Mucosa of descending colon (tissue), 3 donors: ENCODE measurements at regions of chr3 and their contacts with region 1.

Region 1: GRCh38 chr3:185332026-185332735 is 30.8 kb upstream of the MAP3K13 start:
- DNase-seq: no peak
- ATAC-seq: peak; percentile 71
- H3K4me3 ChIP-seq: no peak overlapping the region
- H3K4me1 ChIP-seq: peaks cover 25% of the 10 kb centered on the region
- CTCF ChIP-seq: no peak

Region 2: DNA sequence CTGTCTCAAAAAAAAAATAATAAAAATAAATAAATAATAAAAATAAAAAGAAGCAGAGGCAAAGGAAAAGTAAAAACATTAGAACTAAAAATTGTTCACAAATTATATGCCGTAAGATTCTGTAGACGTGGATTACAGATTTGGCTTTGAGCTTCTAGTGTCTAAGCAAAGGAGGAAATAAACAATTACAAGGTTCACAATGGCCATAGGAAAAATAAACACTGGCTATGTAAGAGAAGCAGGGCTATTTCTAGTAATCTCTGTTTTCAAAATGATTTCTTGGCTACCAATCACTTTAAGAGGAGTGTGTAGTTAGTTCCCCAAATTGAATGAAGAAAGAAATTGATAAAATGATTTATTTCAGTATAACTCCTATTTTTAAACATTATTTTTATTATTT is 112.1 kb after region 1 on chr3:
- intact Hi-C with region 1: no loop called
- DNase-seq: no peak
- ATAC-seq: no peak
- H3K4me3 ChIP-seq: no peak overlapping the region
- H3K4me1 ChIP-seq: no peaks in the 10 kb centered on the region
- CTCF ChIP-seq: no peak

Region 3: DNA sequence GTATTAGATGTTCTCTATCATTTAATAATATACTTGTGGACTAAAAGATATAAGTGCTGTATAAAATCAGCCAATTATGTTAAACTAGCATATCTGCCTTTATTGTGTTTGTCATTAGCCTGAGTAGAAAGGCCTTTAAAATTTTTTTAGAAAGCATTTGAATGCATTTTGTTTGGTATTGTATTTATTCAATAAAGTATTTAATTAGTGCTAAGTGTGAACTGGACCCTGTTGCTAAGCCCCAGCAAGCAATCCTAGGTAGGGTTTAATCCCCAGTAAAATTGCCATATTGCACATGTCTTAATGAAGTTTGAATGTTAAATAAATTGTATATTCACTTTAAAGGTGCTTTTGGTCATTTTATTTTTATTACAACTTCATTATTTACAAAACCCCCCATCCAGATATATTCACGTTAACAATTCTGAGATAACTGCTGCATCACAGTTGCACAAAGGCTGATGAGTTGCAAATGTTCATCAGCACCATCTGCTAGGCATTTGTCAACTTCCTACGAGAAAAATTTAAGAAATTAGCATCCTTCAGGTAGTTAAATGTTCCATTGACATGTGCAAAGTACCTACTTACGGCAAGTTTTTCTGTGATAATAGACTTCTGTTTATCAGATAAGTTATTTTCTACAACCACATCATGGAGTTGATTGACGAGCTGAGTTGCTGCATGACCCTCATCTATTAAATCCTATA is 1457.5 kb after region 1 on chr3:
- intact Hi-C with region 1: loop called in 1 of 2 experiments (anchors 5 kb)
- DNase-seq: no peak
- ATAC-seq: no peak
- H3K4me3 ChIP-seq: no peak overlapping the region
- H3K4me1 ChIP-seq: peaks cover 31% of the 10 kb centered on the region
- CTCF ChIP-seq: no peak